Activated CD4-positive, alpha-beta T cell treated with anti-CD3 and anti-CD28 coated beads, Interleukin-2, amount 10 ng/mL, durations not matched to agents 24 days and 14 days (primary cell): ENCODE measurements at regions of chr12 and their contacts with region 1.

Region 1: GRCh38 chr12:12032851-12033588 is 37.7 kb upstream of the BCL2L14 start:
- DNase-seq: peak; percentile 90
- H3K4me3 Mint-ChIP-seq: peak overlapping the region; percentile 81
- H3K27ac Mint-ChIP-seq: peak overlapping the region; percentile 93
- H3K4me1 Mint-ChIP-seq: peaks cover 59% of the 10 kb centered on the region
- H3K27me3 Mint-ChIP-seq: no peaks in the 10 kb centered on the region

Region 2: GRCh38 chr12:11553871-11554533 is 479.0 kb before region 1 on chr12:
- intact Hi-C with region 1: loop called (anchors 10 kb)
- DNase-seq: peak; percentile 88
- H3K4me3 Mint-ChIP-seq: peak overlapping the region; percentile 26
- H3K27ac Mint-ChIP-seq: no peak overlapping the region
- H3K4me1 Mint-ChIP-seq: peaks cover 22% of the 10 kb centered on the region
- H3K27me3 Mint-ChIP-seq: peaks cover 18% of the 10 kb centered on the region

Region 3: DNA sequence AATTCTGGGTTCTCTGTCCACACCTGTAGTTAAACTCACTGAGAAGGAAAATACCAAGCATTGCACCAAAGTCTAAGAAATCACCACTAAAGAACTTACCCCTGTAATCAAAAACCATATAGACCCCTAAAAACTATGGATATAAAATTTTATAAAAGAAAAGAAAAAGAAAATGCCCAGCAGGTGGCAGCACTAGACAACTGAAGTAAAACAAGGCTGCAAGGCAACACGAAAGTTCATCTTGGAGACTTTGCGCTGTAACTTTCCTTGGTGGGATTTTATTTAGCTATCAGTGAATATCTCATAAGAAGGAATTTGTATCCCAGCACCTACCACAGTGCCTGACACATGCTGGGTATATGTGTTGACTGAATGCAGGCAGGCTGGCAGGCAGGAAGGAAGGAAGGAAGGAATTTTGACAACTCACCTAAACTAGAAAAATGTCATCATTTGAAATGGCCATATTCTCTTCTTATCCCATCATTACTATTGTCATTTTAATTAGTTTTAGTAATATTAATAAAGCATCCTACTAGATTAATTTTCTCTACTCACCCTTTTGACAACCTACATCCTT is 451.8 kb before region 1 on chr12:
- intact Hi-C with region 1: loop called (anchors 1 kb)
- DNase-seq: peak; percentile 90
- H3K4me3 Mint-ChIP-seq: no peak overlapping the region
- H3K27ac Mint-ChIP-seq: no peak overlapping the region
- H3K4me1 Mint-ChIP-seq: peaks cover 26% of the 10 kb centered on the region
- H3K27me3 Mint-ChIP-seq: peaks cover 8% of the 10 kb centered on the region

Region 4: GRCh38 chr12:11724888-11725311 is 308.1 kb before region 1 on chr12:
- intact Hi-C with region 1: loop called (anchors 5 kb)
- DNase-seq: no peak
- H3K4me3 Mint-ChIP-seq: no peak overlapping the region
- H3K27ac Mint-ChIP-seq: no peak overlapping the region
- H3K4me1 Mint-ChIP-seq: peaks cover 68% of the 10 kb centered on the region
- H3K27me3 Mint-ChIP-seq: no peaks in the 10 kb centered on the region

Region 5: DNA sequence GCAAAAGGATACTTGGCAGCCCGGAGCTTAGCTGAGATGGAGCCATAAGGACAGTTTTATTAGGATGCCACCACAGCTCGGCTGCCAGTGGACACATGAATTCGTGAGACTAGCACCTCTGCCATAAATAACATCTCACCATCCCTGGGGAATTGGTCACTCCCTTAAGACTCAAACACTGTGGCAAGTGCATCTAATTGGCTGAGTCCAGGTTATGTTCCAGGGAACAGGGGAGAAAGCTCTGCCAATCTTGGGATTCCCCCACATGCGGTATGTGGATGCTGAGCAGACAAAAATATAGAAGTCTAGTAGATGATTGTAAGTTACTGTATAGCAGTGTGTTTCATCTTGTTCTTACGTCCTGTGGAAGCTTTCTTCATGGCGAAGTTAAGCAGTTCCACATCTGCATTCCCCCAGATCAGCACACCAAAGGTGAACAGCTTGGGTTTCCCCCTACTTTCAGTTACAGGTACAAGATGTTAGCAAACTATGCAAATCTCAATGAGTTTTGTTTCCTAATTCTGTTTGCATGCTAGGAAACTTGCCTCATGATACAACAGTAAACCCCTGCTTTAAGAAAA is 252.4 kb before region 1 on chr12:
- intact Hi-C with region 1: loop called (anchors 2 kb)
- DNase-seq: peak; percentile 54
- H3K4me3 Mint-ChIP-seq: peak overlapping the region; percentile 29
- H3K27ac Mint-ChIP-seq: peak overlapping the region; percentile 87
- H3K4me1 Mint-ChIP-seq: peaks cover 66% of the 10 kb centered on the region
- H3K27me3 Mint-ChIP-seq: no peaks in the 10 kb centered on the region

Region 6: GRCh38 chr12:11958221-11959091 is 74.6 kb before region 1 on chr12:
- intact Hi-C with region 1: loop called (anchors 1 kb)
- DNase-seq: peak; percentile 85
- H3K4me3 Mint-ChIP-seq: peak overlapping the region; percentile 27
- H3K27ac Mint-ChIP-seq: peak overlapping the region; percentile 91
- H3K4me1 Mint-ChIP-seq: peaks cover 57% of the 10 kb centered on the region
- H3K27me3 Mint-ChIP-seq: no peaks in the 10 kb centered on the region

Region 7: GRCh38 chr12:11981121-11981733 is 51.8 kb before region 1 on chr12:
- intact Hi-C with region 1: loop called (anchors 1 kb)
- DNase-seq: peak; percentile 92
- H3K4me3 Mint-ChIP-seq: peak overlapping the region; percentile 68
- H3K27ac Mint-ChIP-seq: peak overlapping the region; percentile 99
- H3K4me1 Mint-ChIP-seq: peaks cover 62% of the 10 kb centered on the region
- H3K27me3 Mint-ChIP-seq: no peaks in the 10 kb centered on the region